Mammary epithelial cell (primary cell): ENCODE measurements at regions of chr2 and their contacts with region 1.

Region 1: DNA sequence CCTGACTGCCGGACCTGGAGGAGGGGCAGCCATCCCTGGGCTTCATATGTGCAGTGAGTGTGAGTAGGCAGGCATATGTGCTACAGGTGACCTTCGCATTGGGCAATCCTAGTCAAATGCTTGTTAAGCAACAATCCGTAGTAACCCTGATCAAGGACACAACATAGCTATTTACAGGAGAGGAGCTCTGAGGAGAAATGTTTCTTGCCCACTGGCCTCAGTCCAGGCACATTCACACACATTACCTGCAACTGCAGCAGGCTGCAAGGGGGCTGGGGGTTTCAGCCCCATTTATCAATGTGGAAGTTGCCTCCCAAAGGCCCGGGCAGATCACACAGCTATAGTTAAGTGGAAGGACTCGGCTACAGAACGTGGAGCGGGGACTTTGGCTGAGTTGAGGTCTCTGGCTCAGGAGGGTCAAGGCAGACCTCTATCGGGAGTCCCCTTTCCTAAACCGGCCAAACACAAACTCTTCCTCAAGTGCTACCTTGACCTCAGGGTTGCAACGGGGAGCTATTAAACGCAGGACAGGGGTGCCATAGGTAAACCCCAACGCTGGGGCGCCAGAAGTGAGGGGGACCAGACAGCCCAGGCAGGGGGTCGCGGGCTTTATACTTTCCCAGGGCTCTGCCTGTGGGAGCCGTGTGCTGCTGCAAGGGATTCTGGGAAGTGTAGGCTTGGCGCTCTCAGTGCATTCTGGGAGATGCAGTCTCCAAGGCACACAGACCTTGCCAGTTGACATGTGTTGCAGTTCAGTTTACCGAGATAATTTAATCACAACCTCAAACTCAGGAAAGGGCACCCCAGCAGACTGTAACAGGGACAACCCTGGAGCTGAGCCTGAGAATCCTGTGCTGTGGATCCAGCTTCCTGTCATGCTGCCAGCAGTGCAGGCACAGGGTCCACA is 9.4 kb downstream of the KHK start:
- DNase-seq: peak; percentile 15
- H3K4me3 ChIP-seq: no peak overlapping the region
- H3K27ac ChIP-seq: no peak overlapping the region
- H3K4me1 ChIP-seq: no peaks in the 10 kb centered on the region
- H3K27me3 ChIP-seq: no peaks in the 10 kb centered on the region
- CTCF ChIP-seq: no peak

Region 2: DNA sequence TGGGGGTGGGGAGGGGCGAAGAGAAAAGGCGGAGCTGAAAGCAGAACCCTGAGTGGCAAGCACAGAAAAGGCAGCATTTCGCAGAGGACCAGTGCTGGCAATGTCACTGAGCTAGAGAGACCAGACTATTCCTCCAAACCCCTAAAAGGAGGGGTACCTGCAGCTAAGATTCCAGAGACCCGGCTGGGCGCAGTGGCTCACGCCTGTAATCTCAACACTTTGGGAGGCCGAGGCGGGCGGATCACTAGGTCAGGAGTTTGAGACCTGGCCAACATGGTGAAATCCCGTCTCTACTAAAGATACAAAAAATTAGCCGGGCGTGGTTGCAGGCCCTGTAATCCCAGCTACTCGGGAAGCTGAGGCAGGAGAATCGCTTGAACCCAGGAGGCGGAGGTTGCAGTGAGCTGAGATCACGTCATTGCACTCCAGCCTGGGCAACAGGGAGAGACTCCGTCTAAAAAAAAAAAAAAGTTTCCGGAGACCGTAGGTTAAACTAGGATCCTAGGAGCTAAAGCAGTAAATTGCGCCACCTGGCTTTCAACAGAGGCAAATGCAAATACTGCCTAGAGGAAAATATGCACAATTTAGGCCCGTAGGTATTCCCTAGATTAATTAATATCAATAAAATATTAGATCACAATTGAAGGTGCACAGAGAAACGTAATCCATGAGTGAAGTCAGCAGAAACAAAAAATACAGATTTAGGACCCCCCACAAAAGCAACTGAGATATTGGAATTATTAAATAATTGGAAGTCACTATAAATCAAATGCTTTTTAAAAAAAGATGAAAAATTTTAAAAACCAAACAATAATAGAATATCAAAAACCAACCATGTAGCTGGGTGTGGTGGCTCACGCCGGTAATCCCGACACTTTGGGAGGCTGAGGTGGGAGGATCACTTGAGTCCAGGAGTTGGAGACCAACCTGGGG is 207.4 kb after region 1 on chr2:
- CTCF ChIA-PET with region 1: no interaction called
- dilution Hi-C with region 1: no loop called
- in situ Hi-C with region 1: no loop called
- intact Hi-C with region 1: loop called (anchors 1 kb)
- DNase-seq: peak; percentile 57
- H3K4me3 ChIP-seq: no peak overlapping the region
- H3K27ac ChIP-seq: no peak overlapping the region
- H3K4me1 ChIP-seq: peaks cover 3% of the 10 kb centered on the region
- H3K27me3 ChIP-seq: peaks cover 22% of the 10 kb centered on the region
- CTCF ChIP-seq: peak; percentile 86